ENCODE measurements at regions of chr15 and their contacts with region 1.

Region 1: GRCh38 chr15:64681424-64682024 is 93.9 kb downstream of the RBPMS2 start:
- DNase-seq: no peak
- ATAC-seq: peak; percentile 56
- H3K4me3 ChIP-seq: no peak overlapping the region
- H3K27ac ChIP-seq: no peak overlapping the region
- H3K4me1 ChIP-seq: no peaks in the 10 kb centered on the region
- H3K27me3 ChIP-seq: no peaks in the 10 kb centered on the region

Region 2: DNA sequence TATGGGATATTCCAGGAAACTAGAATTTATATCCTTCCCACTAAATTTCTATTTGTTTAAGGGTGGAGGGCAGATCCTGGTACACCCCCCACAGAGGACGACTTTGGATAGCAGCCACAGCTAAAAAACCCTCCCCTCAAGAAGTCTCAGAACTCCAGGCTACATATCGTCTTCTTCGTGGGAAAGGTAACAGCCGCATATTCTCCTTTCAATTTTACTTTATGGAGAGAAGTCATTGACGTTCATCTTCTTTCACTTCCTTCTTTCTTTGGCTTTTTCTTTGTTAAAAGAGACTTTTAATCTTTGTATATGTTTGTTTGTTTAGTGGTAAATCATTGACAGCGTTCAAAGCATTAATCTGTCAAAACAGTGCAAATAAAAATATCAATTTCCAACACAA is 257.6 kb before region 1 on chr15:
- intact Hi-C with region 1: loop called in 1 of 2 experiments (anchors 5 kb)
- DNase-seq: no peak
- ATAC-seq: no peak
- H3K4me3 ChIP-seq: no peak overlapping the region
- H3K27ac ChIP-seq: no peak overlapping the region
- H3K4me1 ChIP-seq: no peaks in the 10 kb centered on the region
- H3K27me3 ChIP-seq: no peaks in the 10 kb centered on the region

Region 3: DNA sequence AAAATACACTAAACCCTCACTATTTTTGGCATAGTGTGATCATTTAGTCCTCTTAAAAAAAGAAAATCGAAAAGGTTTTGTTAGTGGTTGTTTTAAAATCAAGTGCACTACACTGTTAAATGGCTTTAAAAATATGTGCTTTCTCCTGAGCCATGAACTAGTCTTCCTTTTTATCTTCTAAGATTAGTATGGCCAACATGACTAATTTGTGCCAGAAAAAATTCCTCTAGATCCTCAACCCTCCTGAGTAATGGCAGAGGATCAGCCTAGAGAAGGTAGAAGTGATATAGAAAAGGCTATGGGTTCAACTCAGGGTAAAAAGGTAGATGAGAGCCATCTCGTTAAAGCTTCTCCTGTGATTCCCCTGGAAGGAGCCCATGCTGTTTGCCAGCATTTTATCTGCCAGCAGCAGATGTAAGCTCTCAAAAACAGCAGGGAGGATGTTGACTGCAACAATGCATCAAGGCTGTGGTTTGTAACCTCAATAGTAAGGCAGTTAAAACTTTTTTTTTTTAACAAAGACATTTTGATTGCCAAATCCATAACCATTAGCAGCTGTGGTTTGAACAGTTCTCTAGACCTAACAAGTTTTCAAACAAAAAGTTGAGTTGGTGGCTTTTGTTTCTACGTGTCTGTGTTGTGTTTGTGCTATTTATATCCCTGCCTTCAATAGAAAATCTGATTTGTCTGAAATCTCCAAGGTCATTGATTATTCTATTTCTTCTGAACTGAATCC is 251.4 kb before region 1 on chr15:
- intact Hi-C with region 1: loop called in 1 of 2 experiments (anchors 5 kb)
- DNase-seq: no peak
- ATAC-seq: no peak
- H3K4me3 ChIP-seq: no peak overlapping the region
- H3K27ac ChIP-seq: no peak overlapping the region
- H3K4me1 ChIP-seq: no peaks in the 10 kb centered on the region
- H3K27me3 ChIP-seq: no peaks in the 10 kb centered on the region

Region 4: GRCh38 chr15:64596701-64597476 is 84.6 kb before region 1 on chr15:
- intact Hi-C with region 1: no loop called
- DNase-seq: no peak
- ATAC-seq: peak; percentile 44
- H3K4me3 ChIP-seq: no peak overlapping the region
- H3K27ac ChIP-seq: no peak overlapping the region
- H3K4me1 ChIP-seq: peaks cover 0 to 5% of the 10 kb centered on the region in 2 donors
- H3K27me3 ChIP-seq: no peaks in the 10 kb centered on the region

Region 5: DNA sequence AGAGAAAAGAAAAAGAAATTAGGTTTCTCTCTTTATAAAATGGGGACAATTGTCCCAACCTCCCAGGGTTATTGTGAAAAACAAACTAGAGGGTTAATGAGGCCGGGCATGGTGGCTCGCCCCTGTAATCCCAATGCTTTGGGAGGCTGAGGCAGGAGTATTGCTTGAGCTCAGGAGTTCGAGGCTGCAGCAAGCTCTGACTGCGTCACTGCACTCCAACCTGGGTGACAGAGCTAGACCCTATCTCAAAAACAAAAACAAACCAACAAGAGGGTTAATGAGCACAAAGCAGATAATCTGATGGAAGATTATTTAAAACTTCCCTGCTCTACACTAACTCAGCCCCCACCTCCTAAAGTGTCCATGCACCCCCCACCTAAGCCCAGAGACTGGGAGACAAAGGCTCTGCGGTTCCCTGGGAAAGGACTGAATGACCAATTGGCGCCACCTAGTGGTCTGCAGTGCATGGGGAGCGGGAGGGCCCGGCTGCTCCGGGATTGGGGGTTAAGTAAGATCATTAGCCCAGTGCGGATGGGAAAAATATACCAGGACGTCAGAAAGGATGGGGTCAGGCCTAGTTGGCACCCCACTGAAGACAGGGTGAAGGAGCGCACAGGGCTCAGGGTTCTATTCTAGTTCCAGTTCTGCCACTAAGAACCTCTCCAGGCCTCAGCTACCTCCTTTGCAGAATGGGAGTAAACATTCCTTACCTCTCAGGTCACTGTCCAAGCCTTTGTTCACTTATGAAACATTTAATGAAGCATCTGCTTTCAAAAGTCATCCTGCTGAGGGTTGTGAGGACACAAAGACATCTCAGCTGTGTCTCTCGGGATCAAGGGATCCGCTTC is 128.3 kb after region 1 on chr15:
- intact Hi-C with region 1: loop called (anchors 5 kb)
- DNase-seq: peak; percentile 85 to 94
- ATAC-seq: peak; percentile 86
- H3K4me3 ChIP-seq: no peak overlapping the region
- H3K27ac ChIP-seq: no peak overlapping the region
- H3K4me1 ChIP-seq: no peaks in the 10 kb centered on the region
- H3K27me3 ChIP-seq: no peaks in the 10 kb centered on the region